Gastrocnemius medialis (tissue), 4 donors: ENCODE measurements at regions of chr3 and their contacts with region 1.

Region 1: GRCh38 chr3:15610082-15610759 is 8.7 kb downstream of the BTD start:
- DNase-seq: peak; percentile 92 to 96
- ATAC-seq: peak; percentile 85 to 87
- H3K4me3 ChIP-seq: no peak overlapping the region
- H3K27ac ChIP-seq: peak overlapping the region; percentile 63 to 90 (median 80)
- H3K4me1 ChIP-seq: peaks cover 32 to 67% of the 10 kb centered on the region in 2 donors
- H3K27me3 ChIP-seq: no peaks in the 10 kb centered on the region
- CTCF ChIP-seq: no peak
- POLR2A ChIP-seq: peak in 1 of 2 donors; percentile 12

Region 2: DNA sequence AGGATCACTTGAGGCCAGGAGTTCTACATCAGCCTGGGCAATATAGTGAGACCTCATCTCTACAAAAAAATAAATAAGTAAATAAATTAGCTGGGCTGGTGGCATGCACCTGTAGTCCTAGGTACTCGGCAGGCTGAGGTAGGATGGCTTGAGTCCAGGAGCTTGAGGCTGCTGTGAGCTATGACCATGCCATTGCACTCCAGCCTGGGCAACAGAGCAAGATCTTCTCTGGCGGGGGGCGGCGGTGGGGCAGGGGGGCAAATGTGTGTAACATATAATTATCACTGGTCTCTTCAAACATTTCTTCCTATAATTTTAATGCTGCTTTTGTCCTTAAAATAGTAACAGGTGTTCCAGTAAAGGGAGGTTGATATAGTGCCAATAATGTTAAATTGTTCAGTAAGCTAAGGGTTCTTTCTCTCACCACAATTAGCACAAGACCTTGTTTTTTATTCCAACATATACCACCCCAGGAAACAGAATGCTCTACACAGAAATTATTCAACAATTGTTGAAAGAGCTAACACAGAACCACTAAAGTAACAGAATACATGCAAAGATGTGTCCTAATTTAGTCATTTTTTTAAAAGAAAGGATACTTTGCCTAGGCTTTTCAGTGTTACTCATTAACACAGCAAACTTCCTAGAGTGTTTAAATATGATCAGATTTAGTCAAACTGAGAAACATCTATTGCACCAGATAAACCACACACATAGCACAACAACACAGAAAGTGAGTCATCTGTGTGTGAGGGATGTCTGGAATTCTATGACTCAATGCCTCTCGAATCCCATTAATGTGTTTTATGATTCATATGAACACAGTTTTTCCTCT is 158.4 kb after region 1 on chr3:
- in situ Hi-C with region 1: no loop called
- intact Hi-C with region 1: loop called (anchors 5 kb)
- DNase-seq: peak; percentile 23 to 25
- ATAC-seq: peak; percentile 100
- H3K4me3 ChIP-seq: no peak overlapping the region
- H3K27ac ChIP-seq: peak overlapping the region; percentile 64 to 75 (median 72)
- H3K4me1 ChIP-seq: peaks cover 20% of the 10 kb centered on the region in 2 donors
- H3K27me3 ChIP-seq: no peaks in the 10 kb centered on the region
- CTCF ChIP-seq: no peak
- POLR2A ChIP-seq: no peak